CD4-positive, alpha-beta memory T cell (primary cell): ENCODE measurements at regions of chr9 and their contacts with region 1.

Region 1: DNA sequence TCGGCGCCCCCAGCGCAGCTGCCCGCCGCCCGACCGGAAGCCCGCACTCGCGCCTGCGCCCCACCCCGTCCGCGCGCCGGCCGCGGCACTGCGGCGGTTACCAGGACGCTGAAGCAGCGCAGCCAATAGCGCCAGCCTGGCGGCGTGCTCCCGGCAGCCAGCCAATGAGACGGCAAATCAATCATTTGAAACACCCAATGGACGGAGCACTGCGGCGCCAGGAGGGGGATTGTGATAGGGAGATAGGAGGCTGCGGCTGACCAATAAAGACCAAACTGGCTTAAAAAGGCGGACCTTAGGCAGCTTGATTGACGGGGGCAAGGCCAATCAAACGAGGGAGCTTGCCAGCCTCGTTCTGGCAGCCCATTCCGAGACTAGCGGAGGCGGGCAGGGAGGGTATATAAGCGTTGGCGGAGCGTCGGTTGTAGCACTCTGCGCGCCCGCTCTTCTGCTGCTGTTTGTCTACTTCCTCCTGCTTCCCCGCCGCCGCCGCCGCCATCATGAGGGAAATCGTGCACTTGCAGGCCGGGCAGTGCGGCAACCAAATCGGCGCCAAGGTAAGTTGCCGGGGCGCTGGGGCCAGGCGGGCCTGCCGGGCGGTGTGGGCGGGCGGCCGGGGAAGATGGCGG is at the start of gene TUBB4B:
- DNase-seq: peak; percentile 98 to 100 (median 99)
- H3K4me3 ChIP-seq: peak within 1 kb of the TSS; percentile 17 to 63
- H3K4me3 Mint-ChIP-seq: peak within 1 kb of the TSS; percentile 83 to 93 (median 92)
- H3K27ac ChIP-seq: peak within 1 kb of the TSS; percentile 75
- H3K27ac Mint-ChIP-seq: peak within 1 kb of the TSS; percentile 89 to 97 (median 94)
- H3K4me1 ChIP-seq: peaks cover 40% of the 10 kb centered on the region
- H3K4me1 Mint-ChIP-seq: peaks cover 6 to 43% (median 25%) of the 10 kb centered on the region in 4 donors
- H3K27me3 ChIP-seq: no peaks in the 10 kb centered on the region
- H3K27me3 Mint-ChIP-seq: peaks cover 0 to 2% of the 10 kb centered on the region in 2 donors
- total RNA-seq, gene TUBB4B: 99.8 to 103 TPM

Region 2: DNA sequence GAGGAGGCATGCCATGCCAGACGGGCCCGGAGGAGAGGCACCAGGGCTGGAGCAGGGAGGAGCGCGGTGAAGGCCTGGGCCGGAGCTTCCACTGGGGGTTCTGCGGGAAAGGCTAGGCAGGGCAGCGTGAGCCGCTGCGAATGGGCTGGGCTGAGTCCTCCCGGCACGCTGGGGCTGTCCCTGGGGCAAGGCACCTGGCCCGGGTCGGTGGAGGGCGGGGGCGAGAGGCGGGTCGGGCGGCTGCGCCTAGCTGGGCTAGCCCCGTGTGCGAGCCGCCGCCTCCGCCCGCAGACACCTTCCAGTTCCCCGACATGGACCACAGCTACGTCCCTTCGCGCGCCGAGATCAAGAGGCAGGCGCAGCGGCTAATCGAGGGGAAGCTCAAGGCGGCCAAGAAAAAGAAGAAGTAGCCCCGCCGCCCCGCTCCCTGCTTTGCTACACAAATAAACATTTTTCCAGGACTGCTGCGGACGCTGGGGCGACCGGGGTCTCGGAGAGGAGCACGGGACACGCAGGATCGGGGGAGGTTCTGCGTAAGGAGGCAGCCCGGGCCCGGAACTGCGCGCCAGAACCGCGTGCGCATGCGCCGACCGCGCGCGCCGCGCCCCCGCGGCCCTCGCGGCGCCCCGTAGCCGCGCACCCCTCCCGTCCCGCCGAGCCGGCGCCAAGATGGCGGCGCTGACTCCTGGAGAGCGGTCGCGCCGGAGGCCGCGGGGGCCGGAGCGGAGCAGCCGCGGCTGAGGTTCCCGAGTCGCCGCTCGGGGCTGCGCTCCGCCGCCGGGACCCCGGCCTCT is 433.5 kb before region 1 on chr9 and contains the start of gene RABL6:
- CTCF ChIA-PET with region 1: no interaction called
- POLR2A ChIA-PET with region 1: interaction called, 11 read pairs
- intact Hi-C with region 1: no loop called
- DNase-seq: peak; percentile 78 to 90 (median 86)
- H3K4me3 ChIP-seq: peak within 1 kb of the TSS; percentile 61 to 74
- H3K4me3 Mint-ChIP-seq: peak within 1 kb of the TSS; percentile 87 to 93 (median 90)
- H3K27ac ChIP-seq: peak within 1 kb of the TSS; percentile 83
- H3K27ac Mint-ChIP-seq: peak within 1 kb of the TSS; percentile 91 to 96 (median 94)
- H3K4me1 ChIP-seq: peaks cover 40% of the 10 kb centered on the region
- H3K4me1 Mint-ChIP-seq: peaks cover 11 to 45% (median 30%) of the 10 kb centered on the region in 4 donors
- H3K27me3 ChIP-seq: no peaks in the 10 kb centered on the region
- H3K27me3 Mint-ChIP-seq: no peaks in the 10 kb centered on the region
- total RNA-seq, gene RABL6: 65.1 to 70.9 TPM

Region 3: GRCh38 chr9:137095664-137096517 is 145.1 kb before region 1 on chr9:
- CTCF ChIA-PET with region 1: interaction called, 4 read pairs
- POLR2A ChIA-PET with region 1: interaction called, 21 read pairs
- intact Hi-C with region 1: loop called (anchors 1 kb)
- DNase-seq: peak; percentile 87 to 94 (median 90)
- H3K4me3 ChIP-seq: peak overlapping the region; percentile 54 to 65
- H3K4me3 Mint-ChIP-seq: peak overlapping the region; percentile 83 to 90 (median 88)
- H3K27ac ChIP-seq: peak overlapping the region; percentile 80
- H3K27ac Mint-ChIP-seq: peak overlapping the region; percentile 88 to 97 (median 96)
- H3K4me1 ChIP-seq: peaks cover 25% of the 10 kb centered on the region
- H3K4me1 Mint-ChIP-seq: peaks cover 14 to 31% (median 18%) of the 10 kb centered on the region in 4 donors
- H3K27me3 ChIP-seq: no peaks in the 10 kb centered on the region
- H3K27me3 Mint-ChIP-seq: no peaks in the 10 kb centered on the region

Region 4: DNA sequence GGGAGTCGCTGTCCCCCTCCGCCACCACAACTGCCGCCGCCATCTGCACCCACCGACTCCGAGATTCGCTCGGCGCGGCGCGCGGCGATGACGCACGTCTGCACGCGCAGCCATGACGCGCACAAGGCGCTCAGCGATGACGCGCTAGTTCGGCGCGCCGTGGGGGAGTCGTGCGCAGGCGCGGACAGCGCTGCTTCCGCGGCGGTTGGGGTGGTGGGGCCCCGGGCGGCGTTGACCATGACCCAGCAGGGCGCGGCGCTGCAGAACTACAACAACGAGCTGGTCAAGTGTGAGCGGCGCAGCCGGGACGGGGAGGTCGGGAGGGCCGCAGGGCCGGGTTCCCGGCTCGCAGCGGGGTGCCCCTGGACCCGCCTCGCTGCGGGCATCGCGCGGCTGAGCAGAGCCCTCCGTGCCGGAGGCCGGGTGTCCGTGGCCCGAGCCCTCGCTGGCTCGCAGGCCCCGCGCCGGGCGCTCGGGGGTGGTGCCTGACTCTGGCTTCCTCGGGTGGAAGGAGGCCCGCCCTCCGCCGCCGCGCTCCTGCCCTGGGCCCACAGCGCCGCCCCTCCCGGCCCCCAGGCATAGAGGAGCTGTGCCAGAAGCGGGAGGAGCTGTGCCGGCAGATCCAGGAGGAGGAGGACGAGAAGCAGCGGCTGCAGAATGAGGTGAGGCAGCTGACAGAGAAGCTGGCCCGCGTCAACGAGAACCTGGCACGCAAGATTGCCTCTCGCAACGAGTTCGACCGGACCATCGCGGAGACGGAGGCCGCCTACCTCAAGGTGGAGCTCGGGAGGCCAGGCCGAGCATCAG is 52.3 kb before region 1 on chr9 and contains the starts of genes ANAPC2 and SSNA1:
- CTCF ChIA-PET with region 1: interaction called, 15 read pairs
- POLR2A ChIA-PET with region 1: interaction called, 15 read pairs
- intact Hi-C with region 1: loop called (anchors 1 kb)
- DNase-seq: peak; percentile 84 to 96 (median 92)
- H3K4me3 ChIP-seq: peak within 1 kb of the TSS; percentile 81 to 90
- H3K4me3 Mint-ChIP-seq: peak within 1 kb of the TSS; percentile 91 to 97 (median 94)
- H3K27ac ChIP-seq: peak within 1 kb of the TSS; percentile 96
- H3K27ac Mint-ChIP-seq: peak within 1 kb of the TSS; percentile 91 to 98 (median 96)
- H3K4me1 ChIP-seq: peaks cover 41% of the 10 kb centered on the region
- H3K4me1 Mint-ChIP-seq: peaks cover 22 to 62% (median 33%) of the 10 kb centered on the region in 4 donors
- H3K27me3 ChIP-seq: no peaks in the 10 kb centered on the region
- H3K27me3 Mint-ChIP-seq: no peaks in the 10 kb centered on the region
- total RNA-seq, gene ANAPC2: 116 to 125 TPM
- total RNA-seq, gene SSNA1: 48.6 to 49.5 TPM

Region 5: DNA sequence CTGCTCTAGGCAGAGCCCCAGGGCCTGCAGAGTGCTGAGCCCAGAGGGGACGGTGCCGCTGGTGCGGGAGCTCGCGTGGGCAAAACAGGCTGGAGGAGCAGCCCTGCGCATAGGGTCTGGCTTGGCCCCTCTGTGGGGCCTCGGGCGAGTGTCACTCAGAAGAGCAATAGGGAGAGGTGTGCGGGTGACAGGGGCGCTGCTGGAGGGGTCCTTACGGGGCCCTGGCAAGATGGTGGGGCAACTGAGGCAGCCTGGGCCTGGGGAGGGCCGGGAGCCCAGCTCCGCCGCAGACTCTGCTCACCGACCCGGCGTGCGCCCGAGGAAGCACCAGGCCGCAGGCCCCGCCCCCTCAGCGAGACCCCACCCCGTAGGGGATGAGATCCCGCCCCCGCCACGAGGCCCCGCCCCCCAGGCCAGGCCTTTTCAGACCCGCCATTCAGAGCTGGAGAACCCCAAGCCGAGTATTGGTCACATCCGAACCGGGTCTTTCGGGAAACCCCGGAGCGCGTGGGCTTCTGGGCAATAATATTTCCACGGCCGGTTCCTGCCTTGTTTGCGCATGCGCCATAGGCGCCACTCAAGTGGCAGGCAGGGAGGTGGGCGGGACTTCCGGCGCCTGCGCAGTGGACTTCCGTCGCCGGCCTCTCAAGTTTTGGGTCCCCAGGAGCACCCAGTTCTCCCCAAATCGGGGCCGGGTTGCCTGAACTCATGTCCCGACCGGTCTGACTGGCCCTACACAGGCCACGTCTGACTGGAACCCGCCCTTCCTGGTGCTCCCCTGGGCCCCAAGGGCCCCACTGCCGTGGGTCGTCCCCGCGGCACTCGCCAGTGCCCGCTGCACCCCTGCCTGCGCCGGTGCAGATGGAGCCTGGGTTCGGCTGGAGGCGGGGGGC is 17.7 kb before region 1 on chr9:
- CTCF ChIA-PET with region 1: interaction called, 12 read pairs
- POLR2A ChIA-PET with region 1: interaction called, 47 read pairs
- intact Hi-C with region 1: loop called (anchors 1 kb)
- DNase-seq: peak; percentile 96 to 99 (median 99)
- H3K4me3 ChIP-seq: peak overlapping the region; percentile 66 to 85
- H3K4me3 Mint-ChIP-seq: peak overlapping the region; percentile 62 to 84 (median 77)
- H3K27ac ChIP-seq: peak overlapping the region; percentile 83
- H3K27ac Mint-ChIP-seq: peak overlapping the region; percentile 42 to 87 (median 68)
- H3K4me1 ChIP-seq: peaks cover 18% of the 10 kb centered on the region
- H3K4me1 Mint-ChIP-seq: peaks cover 2 to 19% (median 6%) of the 10 kb centered on the region in 4 donors
- H3K27me3 ChIP-seq: no peaks in the 10 kb centered on the region
- H3K27me3 Mint-ChIP-seq: peaks cover 2 to 3% of the 10 kb centered on the region in 2 donors

Region 6: DNA sequence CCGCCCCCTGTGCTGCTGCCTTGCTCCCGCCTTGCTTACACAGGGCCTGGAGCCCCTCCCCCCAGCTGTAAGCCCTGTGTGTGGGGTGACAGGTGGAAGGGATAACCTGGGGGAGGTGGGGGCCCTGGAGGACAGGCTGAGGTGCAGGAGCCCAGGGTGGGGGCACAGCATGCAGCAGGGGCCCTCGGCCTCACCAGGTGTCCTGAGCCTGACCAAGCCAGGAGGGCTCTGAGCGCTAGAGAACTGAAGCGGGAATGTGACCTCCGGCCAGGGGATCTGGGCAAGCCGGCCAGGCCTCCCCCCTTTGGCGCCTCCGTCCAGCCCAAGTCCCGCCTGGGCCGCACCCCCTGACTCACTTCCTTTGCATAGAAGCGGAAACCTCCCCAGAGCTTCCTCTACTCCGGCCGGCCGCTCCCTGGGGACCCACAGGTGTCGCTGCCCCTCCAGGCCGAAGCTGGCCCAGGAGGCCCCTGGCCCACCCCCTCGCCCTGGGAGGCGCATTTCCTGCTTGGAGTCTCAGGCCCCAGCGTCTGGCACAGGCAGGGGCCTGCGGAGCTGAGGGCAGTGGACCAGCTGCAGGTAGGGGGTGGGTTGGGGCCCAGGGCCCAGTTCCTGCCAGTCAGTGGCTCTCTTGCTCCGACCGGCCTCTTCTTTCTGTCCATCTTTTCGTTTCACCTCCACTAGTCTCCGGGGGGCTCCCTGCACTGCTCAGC is 36.5 kb after region 1 on chr9 and contains the start of gene TOR4A:
- CTCF ChIA-PET with region 1: interaction called, 7 read pairs
- POLR2A ChIA-PET with region 1: interaction called, 10 read pairs
- intact Hi-C with region 1: no loop called
- DNase-seq: no peak
- H3K4me3 ChIP-seq: peak within 1 kb of the TSS in 1 of 2 donors; percentile 47
- H3K4me3 Mint-ChIP-seq: peak within 1 kb of the TSS; percentile 61 to 83 (median 80)
- H3K27ac ChIP-seq: peak within 1 kb of the TSS; percentile 31
- H3K27ac Mint-ChIP-seq: peak within 1 kb of the TSS in 3 of 7 donors; percentile 13 to 79 (median 66)
- H3K4me1 ChIP-seq: peaks cover 11% of the 10 kb centered on the region
- H3K4me1 Mint-ChIP-seq: peaks cover 4 to 19% (median 10%) of the 10 kb centered on the region in 4 donors
- H3K27me3 ChIP-seq: no peaks in the 10 kb centered on the region
- H3K27me3 Mint-ChIP-seq: peaks cover under 1 to 2% of the 10 kb centered on the region in 2 donors
- total RNA-seq, gene TOR4A: 2.1 TPM

Region 7: DNA sequence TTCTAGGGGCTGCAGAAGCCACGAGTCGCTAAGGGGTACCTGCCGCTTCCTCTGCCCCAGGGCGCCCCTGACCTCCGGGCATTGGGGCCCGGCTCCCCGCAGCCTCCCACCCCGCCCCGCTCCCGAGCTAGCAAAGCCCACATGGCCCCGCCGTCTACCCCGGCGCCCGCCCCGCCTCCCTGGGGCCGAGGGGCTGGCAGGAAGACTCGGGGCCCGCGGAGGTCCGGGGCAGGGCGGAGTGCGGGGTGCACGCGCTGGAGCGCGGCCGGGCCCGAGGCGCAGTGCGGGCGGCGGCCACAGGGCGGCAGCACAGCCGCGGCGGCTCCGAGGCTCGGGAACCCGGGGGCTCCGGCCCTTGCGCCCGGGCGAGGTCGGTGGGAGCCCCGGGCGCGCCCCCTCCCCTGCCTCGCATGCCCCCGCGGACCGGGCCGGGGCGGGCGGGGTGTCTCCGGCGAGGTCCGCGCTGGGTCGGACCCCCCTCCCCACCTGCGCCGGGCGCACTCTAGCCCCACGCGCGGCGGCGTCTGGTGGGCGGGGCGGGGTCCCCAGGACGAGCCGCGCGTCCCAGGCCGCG is 54.4 kb after region 1 on chr9:
- CTCF ChIA-PET with region 1: no interaction called
- POLR2A ChIA-PET with region 1: no interaction called
- intact Hi-C with region 1: no loop called
- DNase-seq: peak in 4 of 5 donors; percentile 40 to 49 (median 44)
- H3K4me3 ChIP-seq: no peak overlapping the region
- H3K4me3 Mint-ChIP-seq: peak overlapping the region in 3 of 8 donors; percentile 12 to 55 (median 29)
- H3K27ac ChIP-seq: no peak overlapping the region
- H3K27ac Mint-ChIP-seq: no peak overlapping the region
- H3K4me1 ChIP-seq: peaks cover 10% of the 10 kb centered on the region
- H3K4me1 Mint-ChIP-seq: peaks cover 0 to 3% (median 3%) of the 10 kb centered on the region in 4 donors
- H3K27me3 ChIP-seq: peaks cover 26% of the 10 kb centered on the region
- H3K27me3 Mint-ChIP-seq: peaks cover 20 to 24% of the 10 kb centered on the region in 2 donors

Region 8: DNA sequence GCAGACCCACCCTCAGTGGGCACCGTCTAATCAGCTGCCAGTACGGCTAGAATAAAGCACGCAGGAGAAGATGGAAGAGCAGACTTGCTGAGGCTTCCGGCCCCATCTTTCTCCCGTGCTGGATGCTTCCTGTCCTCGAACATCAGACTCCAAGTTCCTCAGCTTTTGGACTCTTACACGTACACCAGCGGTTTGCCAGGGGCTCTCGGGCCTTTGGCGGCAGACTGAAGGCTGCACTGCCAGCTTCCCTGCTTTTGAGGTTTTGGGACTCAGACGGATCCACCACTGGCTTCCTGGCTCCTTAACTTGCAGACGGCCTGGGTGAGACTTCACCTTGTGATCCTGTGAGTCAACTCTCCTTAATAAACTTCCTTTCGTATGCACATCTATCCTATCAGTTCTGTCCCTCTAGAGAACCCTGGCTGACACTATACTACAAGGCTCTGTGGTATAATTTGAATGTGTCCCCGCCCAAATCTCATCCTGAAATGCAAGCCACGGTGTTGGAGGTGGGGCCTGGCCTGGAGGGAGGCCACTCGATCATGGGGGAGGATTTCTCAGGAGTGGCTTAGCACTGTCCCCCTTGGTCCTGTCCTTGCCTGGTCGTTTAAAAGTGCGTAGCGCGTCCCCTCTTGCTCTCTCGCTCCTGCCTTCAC is 92.2 kb after region 1 on chr9:
- CTCF ChIA-PET with region 1: no interaction called
- POLR2A ChIA-PET with region 1: no interaction called
- intact Hi-C with region 1: no loop called
- DNase-seq: no peak
- H3K4me3 ChIP-seq: no peak overlapping the region
- H3K4me3 Mint-ChIP-seq: no peak overlapping the region
- H3K27ac ChIP-seq: no peak overlapping the region
- H3K27ac Mint-ChIP-seq: no peak overlapping the region
- H3K4me1 ChIP-seq: no peaks in the 10 kb centered on the region
- H3K4me1 Mint-ChIP-seq: no peaks in the 10 kb centered on the region
- H3K27me3 ChIP-seq: peaks cover under 1% of the 10 kb centered on the region
- H3K27me3 Mint-ChIP-seq: peaks cover 1 to 2% of the 10 kb centered on the region in 2 donors

Region 9: GRCh38 chr9:137605121-137606004 is 364.4 kb after region 1 on chr9 and contains the start of gene ARRDC1:
- CTCF ChIA-PET with region 1: no interaction called
- POLR2A ChIA-PET with region 1: no interaction called
- intact Hi-C with region 1: loop called (anchors 5 kb)
- DNase-seq: peak; percentile 85 to 94 (median 93)
- H3K4me3 ChIP-seq: peak within 1 kb of the TSS in 1 of 2 donors; percentile 63
- H3K4me3 Mint-ChIP-seq: peak within 1 kb of the TSS; percentile 80 to 88 (median 84)
- H3K27ac ChIP-seq: peak within 1 kb of the TSS; percentile 70
- H3K27ac Mint-ChIP-seq: peak within 1 kb of the TSS in 4 of 7 donors; percentile 52 to 75 (median 68)
- H3K4me1 ChIP-seq: peaks cover 15% of the 10 kb centered on the region
- H3K4me1 Mint-ChIP-seq: peaks cover 7 to 37% (median 20%) of the 10 kb centered on the region in 4 donors
- H3K27me3 ChIP-seq: no peaks in the 10 kb centered on the region
- H3K27me3 Mint-ChIP-seq: no peaks in the 10 kb centered on the region
- total RNA-seq, gene ARRDC1: 82.3 to 86.2 TPM